IMR-90 (cell line): ENCODE measurements at regions of chr12 and their contacts with region 1.

Region 1: DNA sequence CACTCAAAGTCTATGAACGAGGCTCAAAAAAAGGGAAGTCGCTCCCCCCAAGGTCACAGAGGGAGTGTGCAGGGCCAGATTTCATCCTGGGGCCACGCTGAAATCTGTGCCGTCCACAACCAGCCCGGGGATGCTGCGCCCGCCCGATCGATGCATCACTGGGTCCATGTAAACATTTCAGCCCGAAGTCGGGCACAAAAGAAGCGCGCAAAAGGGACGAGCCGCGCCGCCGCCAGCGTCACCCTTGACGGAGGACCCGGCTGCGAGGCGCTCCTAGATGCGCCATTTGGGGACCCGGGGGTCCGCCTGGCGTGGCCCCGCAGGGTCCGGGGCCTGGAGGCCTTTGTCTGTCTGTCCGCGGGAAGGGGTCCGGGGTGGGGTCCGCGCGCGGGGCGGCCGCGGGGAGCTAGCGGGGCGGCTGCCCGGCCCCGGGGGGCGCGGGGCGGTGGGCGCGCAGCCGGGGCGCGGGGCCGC is 497 bp downstream of the FBXO21 start:
- DNase-seq: peak; percentile 45
- ATAC-seq: peak; percentile 55
- H3K4me3 ChIP-seq: peak overlapping the region; percentile 81
- H3K27ac ChIP-seq: peak overlapping the region; percentile 0; the same call in 1 of the 2 replicates
- H3K4me1 ChIP-seq: no peaks in the 10 kb centered on the region
- H3K27me3 ChIP-seq: no peaks in the 10 kb centered on the region
- CTCF ChIP-seq: no peak
- POLR2A ChIP-seq: no peak
- RAD21 ChIP-seq: no peak

Region 2: DNA sequence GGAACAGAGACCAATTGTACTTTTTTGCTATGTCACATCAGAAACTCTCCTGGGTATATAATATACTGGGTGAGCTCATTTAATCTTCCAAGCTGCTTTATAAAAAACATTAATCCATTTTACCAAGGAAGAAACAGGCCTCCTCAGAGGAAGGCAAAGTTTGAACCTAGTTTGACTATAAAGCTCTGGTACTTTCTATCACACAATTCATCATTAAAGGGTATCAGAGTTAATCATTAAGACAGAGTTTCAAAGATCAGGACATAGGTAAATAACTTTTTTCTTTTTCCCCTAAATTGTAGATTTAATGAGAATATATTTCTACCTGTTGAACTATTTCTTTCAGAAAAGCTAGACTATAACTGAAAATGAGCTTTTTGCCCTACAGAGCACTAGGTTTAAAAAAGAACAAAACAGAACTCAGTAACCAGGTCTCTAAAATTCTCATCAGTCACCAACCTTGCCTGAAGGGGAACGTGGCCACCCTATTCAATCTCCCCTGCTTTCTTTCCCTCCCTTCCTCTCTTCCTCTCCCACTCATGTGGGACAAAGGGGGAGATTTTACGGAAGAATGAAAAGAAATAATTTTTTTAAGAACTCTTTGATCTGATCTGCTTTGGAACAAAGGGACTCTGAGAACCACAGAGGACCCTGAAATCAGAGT is 18.1 kb before region 1 on chr12:
- CTCF ChIA-PET with region 1: interaction called, 3 read pairs
- POLR2A ChIA-PET with region 1: no interaction called
- dilution Hi-C with region 1: no loop called
- in situ Hi-C with region 1: no loop called
- intact Hi-C with region 1: loop called (anchors 2 kb)
- DNase-seq: no peak
- ATAC-seq: no peak
- H3K4me3 ChIP-seq: no peak overlapping the region
- H3K27ac ChIP-seq: no peak overlapping the region
- H3K4me1 ChIP-seq: peaks cover 7% of the 10 kb centered on the region
- H3K27me3 ChIP-seq: no peaks in the 10 kb centered on the region
- CTCF ChIP-seq: no peak
- POLR2A ChIP-seq: no peak
- RAD21 ChIP-seq: no peak